Activated CD4-positive, alpha-beta T cell treated with anti-CD3 and anti-CD28 coated beads, Interleukin-2, amount 10 ng/mL, durations not matched to agents 7 days and 5 days (primary cell): ENCODE measurements at regions of chr5 and their contacts with region 1.

Region 1: DNA sequence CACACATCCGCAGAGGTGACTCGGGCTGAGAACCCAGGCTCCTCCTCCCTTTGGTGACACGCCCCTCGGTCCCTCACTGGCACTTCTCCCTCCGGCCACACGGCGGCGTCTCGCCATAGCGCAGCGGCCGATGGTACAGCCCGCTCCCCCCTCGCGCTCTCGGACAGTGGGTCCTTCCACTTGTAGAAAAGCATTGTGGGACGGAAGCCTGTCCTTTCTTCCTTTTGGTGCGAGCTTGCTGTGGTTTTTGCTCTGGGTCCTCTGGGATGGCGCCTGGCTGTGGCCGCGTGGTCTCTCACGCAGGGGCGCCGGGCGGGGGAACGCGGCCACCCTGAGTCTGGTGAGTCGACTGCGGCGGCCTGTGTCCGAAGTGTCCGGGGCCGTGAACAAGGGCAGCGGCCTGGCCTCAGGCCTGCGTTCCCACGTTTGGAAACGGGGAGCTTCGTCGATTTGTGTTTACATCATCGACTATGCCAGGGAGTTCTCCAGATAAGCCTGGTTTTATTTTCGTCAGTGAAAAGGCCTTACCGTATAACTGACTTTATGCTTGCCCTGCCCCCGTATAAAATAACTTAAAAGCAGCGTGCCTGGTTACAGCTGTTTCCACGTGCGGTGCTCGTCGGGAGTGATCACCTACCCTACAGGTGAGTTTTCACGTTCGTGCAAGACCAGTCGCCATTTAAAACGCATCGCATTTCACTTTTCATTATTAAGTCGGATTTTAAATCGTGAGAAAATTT is 258.3 kb downstream of the EPB41L4A start:
- DNase-seq: peak; percentile 89
- H3K4me3 Mint-ChIP-seq: peak overlapping the region; percentile 90
- H3K27ac Mint-ChIP-seq: peak overlapping the region; percentile 89
- H3K4me1 Mint-ChIP-seq: peaks cover 25% of the 10 kb centered on the region
- H3K27me3 Mint-ChIP-seq: peaks cover 3% of the 10 kb centered on the region

Region 2: DNA sequence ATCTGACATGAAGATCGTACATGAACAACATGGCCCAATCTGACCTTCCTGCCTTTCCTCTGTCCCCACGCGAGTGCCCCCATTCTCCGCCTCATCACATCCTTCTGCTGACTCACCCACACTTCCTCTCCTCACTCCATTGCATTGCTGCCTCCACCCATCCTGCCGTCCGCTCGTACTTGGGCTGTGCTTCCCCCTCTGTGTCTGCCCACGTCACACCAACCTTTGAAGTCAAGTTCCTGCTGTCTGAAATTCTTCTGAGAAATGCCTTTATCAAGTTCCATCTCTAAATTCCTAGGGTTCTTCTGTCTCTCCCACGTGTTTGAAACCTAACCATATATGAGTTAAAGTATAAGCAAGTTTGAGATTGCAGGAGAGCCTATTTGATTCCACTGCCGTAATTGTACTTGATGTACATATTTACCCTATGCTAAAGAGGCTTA is 630.5 kb before region 1 on chr5:
- CTCF ChIA-PET with region 1: interaction called, 10 read pairs
- POLR2A ChIA-PET with region 1: no interaction called
- DNase-seq: peak; percentile 88
- H3K4me3 Mint-ChIP-seq: peak overlapping the region; percentile 8
- H3K27ac Mint-ChIP-seq: peak overlapping the region; percentile 83
- H3K4me1 Mint-ChIP-seq: peaks cover 28% of the 10 kb centered on the region
- H3K27me3 Mint-ChIP-seq: peaks cover 3% of the 10 kb centered on the region

Region 3: DNA sequence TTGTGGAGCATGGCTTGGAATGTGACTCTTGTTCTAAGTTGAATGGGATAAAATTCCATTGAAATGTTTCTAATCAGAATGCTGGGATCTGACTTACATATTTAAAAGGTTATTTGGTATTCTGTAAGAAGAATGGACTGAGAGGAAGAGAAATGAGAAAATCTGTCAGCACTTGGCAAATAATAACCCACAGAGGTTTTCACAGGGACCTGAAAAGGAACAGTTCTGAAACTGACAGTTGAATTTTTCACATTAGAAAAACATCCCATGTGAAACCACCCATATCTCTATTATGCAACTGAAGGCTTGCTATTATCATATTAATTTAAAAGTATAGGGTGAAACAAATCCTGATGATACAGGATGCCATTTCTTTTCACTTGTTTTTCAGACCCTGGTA is 44.5 kb before region 1 on chr5:
- CTCF ChIA-PET with region 1: no interaction called
- POLR2A ChIA-PET with region 1: no interaction called
- DNase-seq: no peak
- H3K4me3 Mint-ChIP-seq: no peak overlapping the region
- H3K27ac Mint-ChIP-seq: no peak overlapping the region
- H3K4me1 Mint-ChIP-seq: no peaks in the 10 kb centered on the region
- H3K27me3 Mint-ChIP-seq: peaks cover 7% of the 10 kb centered on the region

Region 4: DNA sequence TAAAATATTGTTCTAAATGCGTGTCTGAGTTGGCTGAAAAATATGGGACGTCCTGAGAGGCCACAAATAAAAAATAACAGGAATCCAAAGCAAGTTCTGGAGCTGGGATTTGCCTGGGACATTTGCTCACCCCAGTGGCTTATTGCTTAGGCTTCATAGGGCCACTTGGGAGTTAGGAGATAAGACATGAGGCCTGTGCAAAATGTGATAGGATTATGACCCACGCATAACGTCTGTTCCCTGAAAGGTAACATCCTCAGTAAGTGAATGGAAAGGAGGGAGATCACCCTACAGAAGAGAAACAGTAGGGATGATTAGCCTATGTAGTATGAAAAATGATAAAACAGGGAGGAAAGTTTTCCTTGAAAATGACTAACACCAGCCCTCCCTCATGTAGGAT is 11.1 kb before region 1 on chr5:
- CTCF ChIA-PET with region 1: interaction called, 13 read pairs
- POLR2A ChIA-PET with region 1: no interaction called
- DNase-seq: no peak
- H3K4me3 Mint-ChIP-seq: no peak overlapping the region
- H3K27ac Mint-ChIP-seq: no peak overlapping the region
- H3K4me1 Mint-ChIP-seq: peaks cover under 1% of the 10 kb centered on the region
- H3K27me3 Mint-ChIP-seq: peaks cover 7% of the 10 kb centered on the region

Region 5: DNA sequence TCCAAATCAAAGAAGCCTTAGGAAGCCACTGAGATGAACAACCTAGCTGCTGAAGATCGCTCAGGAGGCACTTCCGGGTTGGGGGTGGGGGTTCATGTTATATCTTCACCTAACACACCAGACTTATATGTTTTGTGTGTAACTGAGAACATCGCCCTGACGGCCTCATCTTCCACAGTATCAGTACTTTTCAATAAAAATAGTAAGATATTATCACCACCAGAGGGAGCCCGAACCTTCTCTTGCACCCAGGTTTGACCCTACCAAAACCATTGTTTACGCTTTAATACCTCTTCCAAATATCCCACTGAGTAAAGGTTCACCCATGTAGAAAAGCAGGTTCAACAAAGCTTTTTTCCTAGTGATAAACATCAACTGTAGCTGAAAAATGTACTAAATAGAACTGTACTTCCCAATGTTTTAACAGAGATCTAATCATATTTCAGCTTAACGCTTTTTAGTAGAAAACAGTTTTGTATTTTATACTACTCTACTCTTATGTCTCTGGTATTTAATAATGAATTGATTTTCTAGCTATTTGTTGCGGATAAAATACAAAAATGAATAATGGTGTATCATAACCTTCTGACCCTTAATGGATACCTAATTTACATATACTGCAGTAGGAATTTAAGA is 14.3 kb after region 1 on chr5:
- CTCF ChIA-PET with region 1: interaction called, 20 read pairs
- POLR2A ChIA-PET with region 1: no interaction called
- DNase-seq: peak; percentile 57
- H3K4me3 Mint-ChIP-seq: no peak overlapping the region
- H3K27ac Mint-ChIP-seq: no peak overlapping the region
- H3K4me1 Mint-ChIP-seq: peaks cover 4% of the 10 kb centered on the region
- H3K27me3 Mint-ChIP-seq: peaks cover 15% of the 10 kb centered on the region